PC-3 (cell line): ENCODE measurements at regions of chr10 and their contacts with region 1.

Region 1: DNA sequence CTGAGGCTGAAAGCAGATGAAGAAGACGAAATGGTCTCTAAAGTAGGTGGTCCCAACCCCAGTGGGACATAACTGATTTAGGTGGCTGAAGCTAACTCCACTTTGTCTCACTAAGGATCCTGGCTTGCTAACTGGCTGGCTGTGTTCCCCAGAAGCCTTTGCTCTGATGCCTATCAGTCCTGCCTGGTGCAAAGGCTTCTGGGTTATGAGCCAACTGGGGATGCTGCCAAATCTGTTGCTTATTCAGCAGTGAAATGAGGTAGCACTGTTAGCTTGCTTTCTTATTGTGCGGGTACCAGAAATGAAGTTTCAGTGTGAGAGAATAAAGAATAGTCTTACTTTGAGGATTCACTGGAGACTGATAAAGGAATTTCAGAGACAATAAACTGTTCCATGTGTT is 18.1 kb downstream of the PRKG1 start:
- DNase-seq: peak; percentile 79
- ATAC-seq: peak; percentile 50
- H3K4me3 ChIP-seq: no peak overlapping the region
- H3K27ac ChIP-seq: no peak overlapping the region
- H3K4me1 ChIP-seq: peaks cover 9% of the 10 kb centered on the region
- H3K27me3 ChIP-seq: no peaks in the 10 kb centered on the region
- CTCF ChIP-seq: no peak

Region 2: GRCh38 chr10:51447119-51447518 is 354.7 kb after region 1 on chr10:
- CTCF ChIA-PET with region 1: no interaction called
- POLR2A ChIA-PET with region 1: interaction called, 17 read pairs
- intact Hi-C with region 1: no loop called
- DNase-seq: no peak
- ATAC-seq: no peak
- H3K4me3 ChIP-seq: no peak overlapping the region
- H3K27ac ChIP-seq: no peak overlapping the region
- H3K4me1 ChIP-seq: no peaks in the 10 kb centered on the region
- H3K27me3 ChIP-seq: no peaks in the 10 kb centered on the region
- CTCF ChIP-seq: no peak